SK-N-SH (cell line): ENCODE measurements at regions of chr2 and their contacts with region 1.

Region 1: DNA sequence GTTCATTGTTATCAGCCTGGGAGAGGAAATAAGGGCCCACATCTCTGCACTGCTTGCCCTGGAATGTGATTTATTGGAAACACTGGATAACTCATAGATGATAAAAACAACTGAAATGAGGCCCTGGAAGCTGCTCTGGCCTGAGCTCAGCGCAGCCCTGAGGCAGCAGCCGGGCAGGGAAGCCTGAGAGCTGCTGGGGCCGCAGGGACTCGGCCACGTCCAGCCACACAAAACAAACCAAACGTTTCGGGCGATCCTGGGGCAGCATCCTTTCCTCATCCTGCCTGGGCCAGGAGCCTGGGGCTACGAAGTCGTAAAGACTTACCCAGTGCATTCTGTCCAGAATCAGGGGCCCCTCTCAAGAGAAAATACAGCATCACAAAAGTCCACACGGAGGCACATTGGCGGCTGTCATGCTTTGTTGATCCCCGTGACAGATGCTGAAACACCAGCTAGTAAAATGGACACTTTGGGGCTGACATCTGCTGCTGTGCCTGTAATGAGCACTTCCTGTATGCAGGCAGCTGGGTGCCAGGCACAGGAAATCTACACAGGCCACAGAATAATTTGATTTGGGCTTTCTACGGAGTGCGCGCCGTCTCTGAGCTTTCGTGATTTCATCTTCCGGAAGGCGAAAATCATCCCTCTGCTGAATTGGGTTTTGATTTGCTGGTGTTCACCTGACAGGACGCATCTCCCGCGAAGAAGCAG is 250.6 kb downstream of the EIPR1 start:
- DNase-seq: peak; percentile 83
- H3K4me3 ChIP-seq: peak overlapping the region in 1 of 2 experiments; percentile 44; a peak in 2 of 4 replicates
- H3K27ac ChIP-seq: peak overlapping the region; percentile 45 to 100; a peak in 3 of 4 replicates
- H3K4me1 ChIP-seq: peaks cover 0 to 90% of the 10 kb centered on the region in 2 experiments; a peak in 3 of 4 replicates
- H3K27me3 ChIP-seq: no peaks in the 10 kb centered on the region
- CTCF ChIP-seq: no peak
- EP300 ChIP-seq: peak; percentile 36 to 97; a peak in 3 of 4 replicates
- RAD21 ChIP-seq: peak; percentile 39; the same call in 1 of the 2 replicates

Region 2: GRCh38 chr2:2992622-2993021 is 134.4 kb before region 1 on chr2:
- CTCF ChIA-PET with region 1: no interaction called
- POLR2A ChIA-PET with region 1: no interaction called
- DNase-seq: no peak
- H3K4me3 ChIP-seq: no peak overlapping the region
- H3K27ac ChIP-seq: no peak overlapping the region
- H3K4me1 ChIP-seq: peaks cover 0 to 2% of the 10 kb centered on the region in 2 experiments; a peak in 1 of 4 replicates
- H3K27me3 ChIP-seq: no peaks in the 10 kb centered on the region
- CTCF ChIP-seq: no peak
- EP300 ChIP-seq: no peak
- RAD21 ChIP-seq: 0 out of 2 replicates have a peak, but pooled peaks have one; percentile 13

Region 3: GRCh38 chr2:3041841-3042608 is 85.0 kb before region 1 on chr2:
- CTCF ChIA-PET with region 1: interaction called, 3 read pairs
- POLR2A ChIA-PET with region 1: interaction called, 19 read pairs
- DNase-seq: peak; percentile 90
- H3K4me3 ChIP-seq: no peak overlapping the region
- H3K27ac ChIP-seq: peak overlapping the region; percentile 18 to 95; a peak in 3 of 4 replicates
- H3K4me1 ChIP-seq: peaks cover 0 to 30% of the 10 kb centered on the region in 2 experiments; a peak in 1 of 4 replicates
- H3K27me3 ChIP-seq: no peaks in the 10 kb centered on the region
- CTCF ChIP-seq: no peak
- EP300 ChIP-seq: no peak
- RAD21 ChIP-seq: no peak

Region 4: GRCh38 chr2:3102915-3103569 is 24.0 kb before region 1 on chr2:
- CTCF ChIA-PET with region 1: interaction called, 15 read pairs
- POLR2A ChIA-PET with region 1: interaction called, 66 read pairs
- DNase-seq: no peak
- H3K4me3 ChIP-seq: no peak overlapping the region
- H3K27ac ChIP-seq: peak overlapping the region in 1 of 2 experiments; percentile 100; a peak in 2 of 4 replicates
- H3K4me1 ChIP-seq: peaks cover 0 to 77% of the 10 kb centered on the region in 2 experiments; a peak in 2 of 4 replicates
- H3K27me3 ChIP-seq: no peaks in the 10 kb centered on the region
- CTCF ChIP-seq: no peak
- EP300 ChIP-seq: no peak
- RAD21 ChIP-seq: no peak

Region 5: DNA sequence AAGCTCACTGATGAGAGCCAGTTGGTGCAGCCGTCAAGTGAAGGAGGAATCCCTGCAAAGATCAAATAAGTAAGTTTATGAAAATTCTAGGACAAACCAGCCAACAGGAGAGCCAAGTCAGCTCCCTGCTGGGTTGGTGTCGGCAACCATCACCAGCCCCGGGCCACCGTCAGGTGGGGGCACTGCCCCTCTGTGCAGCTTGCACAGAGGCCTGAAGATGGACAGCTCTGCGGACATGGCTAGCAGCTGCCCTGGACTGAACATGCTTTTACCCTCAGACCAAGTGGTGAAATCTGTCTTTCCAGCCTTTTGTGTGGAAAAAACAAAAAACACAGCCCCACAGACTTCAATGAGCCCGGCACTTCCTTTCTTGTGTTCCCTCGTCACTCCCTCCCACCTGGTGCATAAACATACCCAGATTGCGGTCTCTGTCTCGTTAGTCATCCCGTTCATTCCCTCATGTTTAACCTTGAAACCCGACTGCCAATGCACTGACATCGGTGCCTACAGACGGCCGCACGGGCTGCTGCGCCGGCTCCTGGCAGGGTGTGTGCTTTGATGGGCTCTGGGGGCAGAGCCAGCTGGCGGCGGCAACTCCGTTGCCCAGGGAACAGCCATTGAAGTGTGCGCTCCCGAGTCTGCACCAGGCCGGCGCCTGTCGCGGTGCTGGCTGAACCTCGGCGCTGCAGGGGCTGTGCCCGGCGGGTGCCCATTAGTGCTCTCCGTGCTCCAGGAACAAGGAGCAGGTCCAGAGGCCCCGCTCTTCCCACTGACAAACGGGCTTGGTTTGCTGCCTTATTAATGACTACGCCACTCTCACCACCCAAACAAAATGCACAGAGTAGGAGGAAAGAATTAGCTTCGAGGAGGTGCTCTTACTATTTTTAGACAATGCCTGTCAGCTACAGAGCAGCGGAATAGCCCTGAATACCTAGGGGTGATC is 155.3 kb after region 1 on chr2:
- CTCF ChIA-PET with region 1: interaction called, 3 read pairs
- POLR2A ChIA-PET with region 1: interaction called, 12 read pairs
- DNase-seq: peak; percentile 99
- H3K4me3 ChIP-seq: peak overlapping the region; percentile 22 to 31; a peak in 2 of 4 replicates
- H3K27ac ChIP-seq: peak overlapping the region in 1 of 2 experiments; percentile 100; a peak in 2 of 4 replicates
- H3K4me1 ChIP-seq: peaks cover 12 to 82% of the 10 kb centered on the region in 2 experiments; a peak in 3 of 4 replicates
- H3K27me3 ChIP-seq: no peaks in the 10 kb centered on the region
- CTCF ChIP-seq: no peak
- EP300 ChIP-seq: peak in 1 of 2 experiments; percentile 78; a peak in 2 of 4 replicates
- RAD21 ChIP-seq: peak; percentile 58

Region 6: DNA sequence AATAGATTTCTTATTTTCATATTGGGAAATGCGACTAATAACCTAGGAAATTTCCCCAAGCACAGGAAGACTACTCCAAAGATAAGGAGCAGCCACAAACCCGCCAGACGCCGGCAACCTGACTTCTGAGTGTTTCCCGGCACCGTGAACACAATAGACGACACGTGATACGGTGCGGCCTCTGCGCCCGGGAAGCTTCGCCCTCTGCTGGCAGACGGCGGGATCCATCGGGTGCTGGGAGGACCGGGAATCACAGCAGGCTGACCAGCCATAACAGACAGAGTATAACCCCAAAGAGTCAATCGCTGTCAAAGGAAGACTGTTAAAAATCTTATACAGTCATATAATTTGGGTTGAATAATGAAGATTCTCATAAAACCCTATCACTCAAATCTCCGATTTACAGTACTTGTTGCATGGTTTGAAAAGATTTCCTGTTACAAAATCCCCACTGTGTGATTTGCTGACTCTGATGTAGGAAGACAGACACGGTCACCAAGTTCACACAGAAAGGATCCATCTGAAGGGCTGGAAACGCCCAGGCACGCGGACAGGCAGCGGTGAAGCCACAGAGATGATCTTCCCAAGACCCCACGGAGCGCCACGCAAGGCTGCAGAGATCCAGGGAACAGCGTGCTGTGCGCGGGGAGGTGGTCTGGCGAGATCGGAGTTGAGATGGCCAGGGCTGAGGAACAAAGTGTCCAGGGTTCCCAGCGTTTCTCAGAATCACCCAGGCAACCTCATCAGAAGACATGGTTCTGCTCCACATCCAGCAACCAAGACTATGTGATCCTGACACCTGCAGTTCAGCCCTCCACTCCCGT is 176.7 kb after region 1 on chr2:
- CTCF ChIA-PET with region 1: interaction called, 7 read pairs
- POLR2A ChIA-PET with region 1: interaction called, 21 read pairs
- DNase-seq: peak; percentile 97
- H3K4me3 ChIP-seq: peak overlapping the region; percentile 23 to 27; a peak in 3 of 4 replicates
- H3K27ac ChIP-seq: peak overlapping the region; percentile 12 to 99; a peak in 3 of 4 replicates
- H3K4me1 ChIP-seq: peaks cover 4 to 34% of the 10 kb centered on the region in 2 experiments; a peak in 3 of 4 replicates
- H3K27me3 ChIP-seq: no peaks in the 10 kb centered on the region
- CTCF ChIP-seq: peak; percentile 99
- EP300 ChIP-seq: peak in 1 of 2 experiments; percentile 19; a peak in 1 of 4 replicates
- RAD21 ChIP-seq: peak; percentile 97

Region 7: DNA sequence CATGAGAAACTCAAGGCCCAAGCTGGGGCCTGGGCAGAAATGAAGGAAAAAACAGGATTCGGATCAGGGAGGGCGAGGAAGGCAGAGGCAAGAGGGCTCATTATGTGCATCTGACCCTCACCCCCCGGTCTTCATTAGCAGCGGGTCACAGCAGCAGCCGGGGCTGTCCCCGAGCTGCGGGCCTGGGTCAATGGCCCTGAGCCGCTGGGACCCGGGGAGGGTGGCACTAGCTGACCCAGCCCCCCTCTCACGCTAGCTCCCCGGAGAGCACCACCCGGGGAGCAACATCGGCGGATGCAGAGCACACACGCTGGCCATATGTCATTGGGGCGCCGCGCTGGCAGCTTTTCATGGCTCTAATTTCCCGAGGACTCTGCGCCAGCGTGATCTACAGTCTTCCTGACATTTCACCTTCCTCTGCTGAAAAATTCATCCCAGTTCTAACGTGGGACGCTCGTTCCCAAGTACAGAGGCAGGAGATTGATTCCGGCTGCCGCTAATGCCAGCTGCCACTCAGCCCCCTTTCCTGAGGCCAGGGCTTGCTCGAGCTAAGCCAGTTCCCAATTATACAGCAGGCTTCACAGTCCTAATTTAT is 186.8 kb after region 1 on chr2:
- CTCF ChIA-PET with region 1: no interaction called
- POLR2A ChIA-PET with region 1: interaction called, 13 read pairs
- DNase-seq: peak; percentile 91
- H3K4me3 ChIP-seq: no peak overlapping the region; a peak in 1 of 4 replicates
- H3K27ac ChIP-seq: peak overlapping the region in 1 of 2 experiments; percentile 94; a peak in 2 of 4 replicates
- H3K4me1 ChIP-seq: peaks cover 0 to 24% of the 10 kb centered on the region in 2 experiments; a peak in 2 of 4 replicates
- H3K27me3 ChIP-seq: no peaks in the 10 kb centered on the region
- CTCF ChIP-seq: no peak
- EP300 ChIP-seq: peak in 1 of 2 experiments; percentile 64; a peak in 2 of 4 replicates
- RAD21 ChIP-seq: no peak

Region 8: GRCh38 chr2:3377612-3378432 is 250.8 kb after region 1 on chr2 and contains the start of gene EIPR1:
- CTCF ChIA-PET with region 1: no interaction called
- POLR2A ChIA-PET with region 1: interaction called, 15 read pairs
- DNase-seq: peak; percentile 99
- H3K4me3 ChIP-seq: peak within 1 kb of the TSS; percentile 93 to 100
- H3K27ac ChIP-seq: peak within 1 kb of the TSS; percentile 84 to 96
- H3K4me1 ChIP-seq: peaks cover 0 to 27% of the 10 kb centered on the region in 2 experiments; a peak in 2 of 4 replicates
- H3K27me3 ChIP-seq: no peaks in the 10 kb centered on the region
- CTCF ChIP-seq: no peak; the same call in 1 of the 2 replicates
- EP300 ChIP-seq: no peak; a peak in 1 of 4 replicates
- RAD21 ChIP-seq: 0 out of 2 replicates have a peak, but pooled peaks have one; percentile 27
- polyA plus RNA-seq, gene EIPR1: 85.9 and 103 TPM in 2 replicates